WTC11 (cell line): ENCODE measurements at regions of chr4 and their contacts with region 1.

Region 1: GRCh38 chr4:176107695-176108094 is 42.1 kb downstream of the WDR17 start:
- DNase-seq: no peak
- ATAC-seq: no peak
- H3K4me3 Mint-ChIP-seq: no peak overlapping the region
- H3K27ac Mint-ChIP-seq: no peak overlapping the region
- H3K4me1 Mint-ChIP-seq: peaks cover 4% of the 10 kb centered on the region; the same call in 1 of the 2 replicates
- H3K27me3 Mint-ChIP-seq: no peaks in the 10 kb centered on the region
- CTCF ChIP-seq: no peak

Region 2: GRCh38 chr4:176123710-176124407 is 16.2 kb after region 1 on chr4:
- CTCF ChIA-PET with region 1: interaction called, 10 read pairs
- POLR2A ChIA-PET with region 1: no interaction called
- DNase-seq: peak; percentile 36
- ATAC-seq: peak; percentile 99
- H3K4me3 Mint-ChIP-seq: no peak overlapping the region
- H3K27ac Mint-ChIP-seq: peak overlapping the region; percentile 7
- H3K4me1 Mint-ChIP-seq: peaks cover 10% of the 10 kb centered on the region
- H3K27me3 Mint-ChIP-seq: no peaks in the 10 kb centered on the region
- CTCF ChIP-seq: peak; percentile 73

Region 3: DNA sequence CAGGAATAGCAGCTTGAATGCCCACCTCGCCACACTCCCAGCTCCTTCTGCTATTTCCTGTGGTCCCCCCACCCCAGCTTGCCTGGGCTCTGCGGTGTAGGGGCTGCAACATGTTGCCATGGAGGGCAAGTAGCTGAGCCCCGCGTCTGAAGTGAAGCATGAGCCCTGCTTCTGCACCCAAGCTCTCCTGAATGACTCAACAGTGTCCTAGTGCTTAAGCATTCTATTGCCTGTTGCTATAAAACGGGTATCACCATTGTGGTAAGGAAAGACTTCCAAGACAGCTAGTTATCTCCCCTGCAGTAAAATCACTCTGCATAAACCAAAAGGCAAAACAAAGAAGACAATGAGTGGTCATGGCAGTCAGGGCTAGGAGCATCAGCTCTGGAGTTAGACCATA is 119.0 kb after region 1 on chr4:
- CTCF ChIA-PET with region 1: no interaction called
- POLR2A ChIA-PET with region 1: no interaction called
- DNase-seq: no peak
- ATAC-seq: no peak
- H3K4me3 Mint-ChIP-seq: no peak overlapping the region
- H3K27ac Mint-ChIP-seq: no peak overlapping the region
- H3K4me1 Mint-ChIP-seq: peaks cover 8% of the 10 kb centered on the region
- H3K27me3 Mint-ChIP-seq: no peaks in the 10 kb centered on the region
- CTCF ChIP-seq: no peak